ENCODE measurements at regions of chr19 and their contacts with region 1.

Region 1: DNA sequence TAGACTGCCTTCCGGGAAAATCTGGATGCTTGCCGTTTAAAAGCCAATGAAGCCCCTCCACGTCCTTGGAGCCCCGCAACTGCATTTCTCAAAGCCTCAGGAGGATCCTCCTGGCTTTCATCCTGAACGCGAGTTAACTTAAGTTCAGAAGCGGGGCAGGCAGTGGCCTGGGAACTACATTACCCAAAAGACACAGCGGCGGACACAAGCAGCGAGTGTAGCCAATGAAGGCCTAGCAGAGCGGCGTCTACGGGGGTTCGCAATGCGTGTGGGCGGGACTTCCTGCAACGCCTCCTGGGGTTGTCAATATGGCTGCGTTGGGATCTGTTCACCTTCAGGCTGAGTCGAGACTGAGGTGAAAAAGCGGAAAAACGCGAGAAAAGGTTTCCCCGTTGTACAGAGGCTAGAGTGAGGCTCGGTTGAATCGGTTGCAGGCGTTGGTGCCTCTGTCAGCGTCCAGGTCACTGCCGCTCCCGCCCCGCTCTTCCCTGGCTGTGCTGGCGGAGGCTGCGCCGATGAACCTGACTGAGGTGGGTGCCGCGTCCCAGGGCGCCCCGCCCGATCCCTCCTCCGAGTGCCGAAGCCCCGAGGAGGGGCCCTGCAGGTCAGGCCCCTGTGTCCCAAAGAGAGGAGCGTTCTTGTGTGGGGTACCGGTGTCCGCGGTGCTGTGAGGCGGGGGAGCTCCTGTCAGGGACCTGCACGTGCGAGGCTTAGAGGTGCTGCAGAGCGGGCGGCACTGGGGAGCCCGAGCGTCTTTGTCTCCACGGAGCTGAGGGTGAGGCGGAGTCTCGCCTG is at the start of gene ZNF17:
- DNase-seq: peak; percentile 91
- H3K4me3 ChIP-seq: peak within 1 kb of the TSS; percentile 75 to 88 (median 87)
- H3K27ac ChIP-seq: peak within 1 kb of the TSS; percentile 30
- H3K4me1 ChIP-seq: no peaks in the 10 kb centered on the region
- H3K27me3 ChIP-seq: no peaks in the 10 kb centered on the region
- CTCF ChIP-seq: no peak
- total RNA-seq, gene ZNF17: 6.0 to 13.8 TPM

Region 2: DNA sequence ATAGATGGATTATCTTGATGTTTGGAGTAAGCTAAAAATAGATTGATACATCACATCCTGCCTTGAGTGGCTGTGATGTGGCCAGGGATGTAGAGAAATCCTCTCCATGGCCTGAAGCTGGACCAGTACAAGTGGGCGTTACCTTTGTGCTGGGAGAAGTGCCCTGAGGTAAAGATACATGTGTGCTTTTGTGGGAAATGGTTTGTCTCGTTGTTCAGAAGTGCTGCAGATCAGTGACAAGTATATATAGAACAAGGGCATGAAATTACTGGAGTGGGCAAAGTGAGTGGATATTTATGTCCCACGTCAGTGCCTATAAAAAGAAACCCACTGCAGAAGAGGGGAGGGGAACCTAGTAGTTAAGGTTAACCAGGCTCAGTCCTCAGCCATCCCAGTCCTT is 72.2 kb before region 1 on chr19:
- CTCF ChIA-PET with region 1: no interaction called
- dilution Hi-C with region 1: no loop called
- in situ Hi-C with region 1: no loop called
- intact Hi-C with region 1: no loop called
- DNase-seq: no peak
- H3K4me3 ChIP-seq: no peak overlapping the region
- H3K27ac ChIP-seq: no peak overlapping the region
- H3K4me1 ChIP-seq: peaks cover 6% of the 10 kb centered on the region
- H3K27me3 ChIP-seq: no peaks in the 10 kb centered on the region
- CTCF ChIP-seq: no peak

Region 3: DNA sequence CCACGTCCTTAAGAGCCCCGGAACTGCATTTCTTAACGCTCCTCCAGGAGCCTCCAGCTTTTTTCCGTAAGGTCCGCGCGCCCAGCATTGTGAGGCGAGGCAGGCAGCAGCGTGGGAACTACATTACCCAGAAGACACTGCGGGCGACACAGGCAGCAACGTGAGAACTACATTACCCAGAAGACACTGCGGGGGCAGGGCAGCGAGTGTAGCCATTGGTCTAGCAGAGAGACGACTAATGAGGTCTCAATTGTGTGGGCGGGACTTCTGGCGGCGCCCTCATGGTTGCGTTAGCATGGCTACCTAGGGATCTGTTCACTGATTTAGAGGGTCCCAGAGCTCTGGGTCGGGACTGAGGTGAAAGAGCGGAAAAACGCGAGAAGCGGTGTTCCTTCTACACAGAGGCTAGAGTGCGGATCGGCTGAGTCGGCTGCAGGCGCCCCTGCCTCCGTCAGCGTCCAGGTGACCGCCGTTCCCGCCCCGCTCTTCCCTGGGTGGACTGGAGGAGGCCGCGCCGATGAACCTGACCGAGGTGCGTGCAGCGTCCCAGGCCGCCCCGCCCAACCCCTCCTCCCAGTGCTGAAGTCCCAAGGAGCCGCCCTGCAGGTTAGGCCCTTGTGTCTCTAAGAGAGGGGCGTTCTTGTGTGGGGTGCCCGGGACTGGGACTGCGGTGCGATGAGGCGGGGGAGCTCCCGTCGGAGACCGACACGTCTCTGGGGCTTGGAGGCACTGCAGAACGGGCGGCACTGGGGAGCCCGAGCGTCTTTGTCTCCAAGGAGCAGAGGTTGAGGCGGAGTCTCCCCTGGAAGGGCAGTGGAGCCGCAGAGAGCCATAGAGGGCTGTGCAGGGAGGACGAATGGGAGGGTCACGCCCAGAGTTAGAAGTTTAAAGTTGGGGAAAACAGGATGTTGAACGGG is 24.2 kb after region 1 on chr19 and contains the start of gene ZNF749:
- CTCF ChIA-PET with region 1: no interaction called
- dilution Hi-C with region 1: no loop called
- in situ Hi-C with region 1: no loop called
- intact Hi-C with region 1: loop called (anchors 2 kb)
- DNase-seq: peak; percentile 97
- H3K4me3 ChIP-seq: peak within 1 kb of the TSS; percentile 71 to 85 (median 82)
- H3K27ac ChIP-seq: peak within 1 kb of the TSS; percentile 75
- H3K4me1 ChIP-seq: peaks cover 9% of the 10 kb centered on the region
- H3K27me3 ChIP-seq: no peaks in the 10 kb centered on the region
- CTCF ChIP-seq: no peak
- total RNA-seq, gene ZNF749: 13.3 to 14.6 TPM

Region 4: GRCh38 chr19:57537953-57538547 is 127.0 kb after region 1 on chr19:
- CTCF ChIA-PET with region 1: no interaction called
- dilution Hi-C with region 1: loop called (anchors 10 kb)
- in situ Hi-C with region 1: no loop called
- intact Hi-C with region 1: no loop called
- DNase-seq: no peak
- H3K4me3 ChIP-seq: no peak overlapping the region
- H3K27ac ChIP-seq: no peak overlapping the region
- H3K4me1 ChIP-seq: no peaks in the 10 kb centered on the region
- H3K27me3 ChIP-seq: no peaks in the 10 kb centered on the region
- CTCF ChIP-seq: no peak

Region 5: DNA sequence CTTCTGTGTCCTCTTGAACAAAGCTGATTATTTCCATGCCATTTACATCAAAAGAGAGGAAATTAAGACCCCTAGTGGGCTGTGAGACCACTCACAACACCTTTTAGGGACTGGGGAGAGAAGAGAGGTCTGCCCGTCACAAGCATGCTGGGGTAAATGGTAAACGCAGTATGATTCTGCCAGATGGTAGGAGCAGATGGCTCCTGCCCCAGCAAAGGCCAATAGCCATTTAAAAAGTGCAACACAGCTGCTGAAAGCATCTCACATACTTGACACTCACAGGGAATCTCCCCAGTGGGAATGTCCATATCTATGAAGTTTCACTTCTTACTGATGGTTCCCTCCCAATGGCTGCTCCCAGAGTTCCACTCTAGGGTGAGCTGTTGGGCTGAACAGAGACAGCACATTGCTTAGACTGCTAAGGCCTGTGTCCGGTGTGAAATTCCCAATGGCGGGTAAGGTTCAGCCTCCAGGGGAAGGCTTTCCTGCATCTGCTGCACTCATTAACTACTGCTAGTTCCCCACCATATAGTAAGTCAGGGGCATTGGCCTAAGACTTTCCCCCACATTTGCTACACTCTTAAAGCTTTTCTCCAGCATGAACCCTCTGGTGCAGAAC is 308.9 kb after region 1 on chr19:
- CTCF ChIA-PET with region 1: no interaction called
- dilution Hi-C with region 1: no loop called
- in situ Hi-C with region 1: no loop called
- intact Hi-C with region 1: loop called (anchors 10 kb)
- DNase-seq: no peak
- H3K4me3 ChIP-seq: no peak overlapping the region
- H3K27ac ChIP-seq: no peak overlapping the region
- H3K4me1 ChIP-seq: no peaks in the 10 kb centered on the region
- H3K27me3 ChIP-seq: no peaks in the 10 kb centered on the region
- CTCF ChIP-seq: no peak

Region 6: DNA sequence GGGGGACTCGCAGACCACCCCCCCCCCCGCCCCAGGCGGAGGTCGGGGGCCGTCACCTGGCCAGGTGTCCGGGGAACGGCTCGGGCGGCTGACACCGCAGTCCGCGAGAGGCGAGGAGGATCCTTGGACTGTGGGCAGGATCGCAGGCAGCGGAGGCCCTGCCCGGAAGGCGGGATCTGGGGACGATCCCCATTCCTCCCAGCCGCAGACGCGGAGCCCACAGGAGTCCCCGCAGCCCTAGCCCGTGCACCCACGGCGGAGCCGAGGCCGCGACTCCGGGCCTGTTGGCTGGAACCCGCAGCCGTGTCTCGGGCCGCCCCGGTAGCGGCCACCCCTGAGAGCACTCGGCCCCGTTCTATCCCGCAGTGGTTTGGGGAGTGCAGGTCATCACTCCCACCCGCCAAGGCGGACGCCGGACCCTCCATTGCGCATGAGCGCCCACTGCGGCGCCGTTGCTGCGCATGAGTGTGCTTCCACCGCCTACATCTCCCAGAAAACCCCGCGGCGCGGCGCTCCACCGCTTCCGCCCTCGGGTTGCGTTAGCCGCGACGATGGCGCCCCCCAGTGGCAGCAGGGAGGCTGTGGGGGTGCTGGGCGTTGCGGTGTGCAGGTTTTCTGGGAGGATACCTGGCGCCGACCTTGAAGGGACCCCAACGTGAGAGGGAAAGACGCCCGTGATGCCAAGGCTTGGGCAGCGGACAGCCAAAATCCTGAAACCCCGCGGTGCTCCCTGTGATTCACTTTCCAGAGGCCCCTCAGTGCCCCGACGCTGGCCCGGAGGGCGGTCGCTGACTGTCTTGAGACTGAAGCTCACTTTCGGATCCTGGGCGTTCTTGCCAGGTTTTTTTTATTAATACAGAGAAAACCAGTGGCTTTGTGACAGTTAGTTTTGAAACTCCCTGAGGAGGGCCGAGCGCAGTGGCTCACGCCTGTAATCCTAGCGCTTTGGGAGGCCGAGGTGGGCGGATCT is 743.9 kb after region 1 on chr19:
- CTCF ChIA-PET with region 1: no interaction called
- dilution Hi-C with region 1: no loop called
- in situ Hi-C with region 1: loop called in 1 of 2 experiments (anchors 10 kb)
- intact Hi-C with region 1: loop called (anchors 1 kb)
- DNase-seq: peak; percentile 92
- H3K4me3 ChIP-seq: peak overlapping the region; percentile 85 to 86 (median 85)
- H3K27ac ChIP-seq: peak overlapping the region; percentile 43
- H3K4me1 ChIP-seq: no peaks in the 10 kb centered on the region
- H3K27me3 ChIP-seq: no peaks in the 10 kb centered on the region
- CTCF ChIP-seq: peak; percentile 90 to 98

Measured in mammary epithelial cell (primary cell).